IMR-90 (cell line): ENCODE measurements at regions of chr3 and their contacts with region 1.

Region 1: GRCh38 chr3:38190481-38190881 is 25.1 kb downstream of the OXSR1 start:
- DNase-seq: no peak
- ATAC-seq: no peak
- H3K4me3 ChIP-seq: no peak overlapping the region
- H3K27ac ChIP-seq: no peak overlapping the region
- H3K4me1 ChIP-seq: no peaks in the 10 kb centered on the region
- H3K27me3 ChIP-seq: no peaks in the 10 kb centered on the region
- CTCF ChIP-seq: no peak
- POLR2A ChIP-seq: no peak
- RAD21 ChIP-seq: no peak

Region 2: DNA sequence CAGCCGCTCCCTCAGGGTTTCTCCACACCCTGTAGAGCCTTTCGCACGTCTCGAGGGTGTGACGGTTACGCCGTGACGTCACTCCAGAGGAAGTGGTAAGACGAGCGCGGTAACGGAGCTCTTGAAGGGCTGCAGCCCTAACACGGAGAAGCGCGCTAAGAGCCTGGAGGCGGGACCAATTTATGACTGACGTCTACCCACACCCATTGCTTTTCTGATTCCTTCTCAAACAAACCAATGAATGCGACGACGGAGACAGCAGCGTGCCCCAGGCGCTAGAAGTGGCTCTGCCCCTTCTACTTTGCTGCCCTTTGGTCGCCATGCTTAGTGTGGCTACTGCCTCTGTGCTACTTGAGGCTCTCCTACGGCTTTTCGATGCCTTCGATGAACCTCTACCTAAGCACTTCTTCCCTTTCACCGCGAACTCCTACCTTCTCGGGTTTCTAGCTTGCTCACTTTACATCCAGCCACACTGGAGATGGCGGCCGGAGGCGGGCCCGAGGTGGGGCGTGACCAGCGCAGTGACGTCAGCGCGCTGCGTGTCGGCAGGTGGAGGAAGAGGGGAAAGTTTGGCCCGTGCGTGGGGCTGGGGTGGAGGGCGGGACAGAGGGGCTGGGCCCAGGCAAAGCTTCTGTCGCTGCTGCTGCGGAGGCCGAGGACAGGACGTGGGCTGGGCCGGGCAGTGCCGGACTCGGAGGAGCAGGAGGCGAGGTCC is 25.4 kb before region 1 on chr3 and contains the start of gene OXSR1:
- CTCF ChIA-PET with region 1: no interaction called
- POLR2A ChIA-PET with region 1: interaction called, 16 read pairs
- dilution Hi-C with region 1: no loop called
- in situ Hi-C with region 1: no loop called
- intact Hi-C with region 1: no loop called
- DNase-seq: peak; percentile 100
- ATAC-seq: peak; percentile 91
- H3K4me3 ChIP-seq: peak within 1 kb of the TSS; percentile 57
- H3K27ac ChIP-seq: peak within 1 kb of the TSS; percentile 98
- H3K4me1 ChIP-seq: peaks cover 3% of the 10 kb centered on the region; the same call in 1 of the 2 replicates
- H3K27me3 ChIP-seq: no peaks in the 10 kb centered on the region
- CTCF ChIP-seq: no peak
- POLR2A ChIP-seq: peak; percentile 55; the same call in 1 of the 2 replicates
- RAD21 ChIP-seq: no peak; the same call in 1 of the 2 replicates
- total RNA-seq, gene OXSR1: 37.6 and 50.5 TPM in 2 replicates